Sciatic nerve (tissue), 2 donors: ENCODE measurements at regions of chr2 and their contacts with region 1.

Region 1: GRCh38 chr2:170722301-170722700 is 7.2 kb downstream of the SP5 start:
- DNase-seq: no peak
- ATAC-seq: no peak

Region 2: GRCh38 chr2:170695521-170696410 is 26.5 kb before region 1 on chr2:
- intact Hi-C with region 1: loop called (anchors 1 kb)
- DNase-seq: no peak
- ATAC-seq: no peak

Region 3: DNA sequence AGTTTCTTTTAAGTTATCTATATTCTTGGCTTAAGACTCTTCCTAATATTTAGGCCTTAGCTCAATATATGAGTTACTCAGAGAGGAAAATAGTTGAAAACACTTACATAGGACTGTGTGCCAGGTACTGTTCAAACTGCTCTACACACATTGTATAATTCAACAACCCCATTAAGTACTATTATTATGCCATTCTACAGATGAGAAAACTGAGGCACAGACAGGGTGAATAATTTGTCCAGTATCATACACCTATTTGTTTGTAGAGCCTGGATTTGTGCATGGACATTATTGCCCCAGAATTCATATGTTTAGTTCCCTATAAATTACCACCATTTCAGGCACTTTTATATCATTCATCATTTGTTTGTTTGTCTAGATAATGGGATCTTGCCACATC is 76.7 kb after region 1 on chr2:
- intact Hi-C with region 1: no loop called
- DNase-seq: no peak
- ATAC-seq: no peak